ENCODE measurements at regions of chr20 and their contacts with region 1.

Region 1: DNA sequence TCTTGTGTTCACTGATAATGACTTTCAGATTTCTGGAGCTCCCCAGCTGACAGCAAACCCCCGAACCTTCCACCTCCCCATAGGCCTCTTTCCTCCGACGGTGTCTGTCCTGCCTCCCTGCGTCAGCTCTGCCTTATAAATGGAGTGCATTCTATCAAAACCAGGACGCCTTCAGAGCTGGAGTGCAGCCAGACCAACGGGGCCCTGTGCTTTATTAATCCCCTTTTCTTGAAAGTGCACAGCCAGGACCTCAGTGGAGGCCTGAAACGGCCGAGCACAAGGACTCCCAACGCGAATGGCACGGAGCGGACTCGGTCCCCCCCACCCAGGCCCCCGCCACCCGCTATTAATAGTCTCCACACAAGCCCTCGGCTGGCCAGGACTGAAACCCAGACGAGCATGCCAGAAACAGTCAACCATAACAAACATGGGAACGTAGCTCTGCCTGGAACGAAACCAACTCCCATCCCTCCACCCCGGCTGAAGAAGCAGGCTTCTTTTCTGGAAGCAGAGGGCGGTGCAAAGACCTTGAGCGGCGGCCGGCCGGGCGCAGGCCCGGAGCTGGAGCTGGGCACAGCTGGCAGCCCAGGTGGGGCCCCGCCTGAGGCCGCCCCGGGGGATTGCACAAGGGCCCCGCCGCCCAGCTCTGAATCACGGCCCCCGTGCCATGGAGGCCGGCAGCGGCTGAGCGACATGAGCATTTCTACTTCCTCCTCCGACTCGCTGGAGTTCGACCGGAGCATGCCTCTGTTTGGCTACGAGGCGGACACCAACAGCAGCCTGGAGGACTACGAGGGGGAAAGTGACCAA is 42.3 kb upstream of the NAA20 start:
- DNase-seq: peak; percentile 90 to 92 (median 91)
- ATAC-seq: peak; percentile 70 to 91 (median 82)
- H3K4me3 ChIP-seq: peak overlapping the region; percentile 42 to 79 (median 64)
- H3K27ac ChIP-seq: peak overlapping the region; percentile 90 to 96 (median 94)
- H3K4me1 ChIP-seq: peaks cover 12 to 100% (median 65%) of the 10 kb centered on the region in 12 donors
- H3K27me3 ChIP-seq: no peaks in the 10 kb centered on the region
- CTCF ChIP-seq: peak in 2 of 12 donors; percentile 9
- POLR2A ChIP-seq: peak in 1 of 2 donors; percentile 51

Region 2: GRCh38 chr20:19757487-19758132 is 217.2 kb before region 1 on chr20:
- intact Hi-C with region 1: loop called in 1 of 10 experiments (anchors 5 kb)
- DNase-seq: peak; percentile 92 to 96 (median 94)
- ATAC-seq: peak; percentile 86 to 93 (median 90)
- H3K4me3 ChIP-seq: peak overlapping the region; percentile 52 to 94 (median 78)
- H3K27ac ChIP-seq: peak overlapping the region; percentile 91 to 100 (median 98)
- H3K4me1 ChIP-seq: peaks cover 6 to 50% (median 38%) of the 10 kb centered on the region in 12 donors
- H3K27me3 ChIP-seq: no peaks in the 10 kb centered on the region
- CTCF ChIP-seq: no peak
- POLR2A ChIP-seq: no peak

Region 3: DNA sequence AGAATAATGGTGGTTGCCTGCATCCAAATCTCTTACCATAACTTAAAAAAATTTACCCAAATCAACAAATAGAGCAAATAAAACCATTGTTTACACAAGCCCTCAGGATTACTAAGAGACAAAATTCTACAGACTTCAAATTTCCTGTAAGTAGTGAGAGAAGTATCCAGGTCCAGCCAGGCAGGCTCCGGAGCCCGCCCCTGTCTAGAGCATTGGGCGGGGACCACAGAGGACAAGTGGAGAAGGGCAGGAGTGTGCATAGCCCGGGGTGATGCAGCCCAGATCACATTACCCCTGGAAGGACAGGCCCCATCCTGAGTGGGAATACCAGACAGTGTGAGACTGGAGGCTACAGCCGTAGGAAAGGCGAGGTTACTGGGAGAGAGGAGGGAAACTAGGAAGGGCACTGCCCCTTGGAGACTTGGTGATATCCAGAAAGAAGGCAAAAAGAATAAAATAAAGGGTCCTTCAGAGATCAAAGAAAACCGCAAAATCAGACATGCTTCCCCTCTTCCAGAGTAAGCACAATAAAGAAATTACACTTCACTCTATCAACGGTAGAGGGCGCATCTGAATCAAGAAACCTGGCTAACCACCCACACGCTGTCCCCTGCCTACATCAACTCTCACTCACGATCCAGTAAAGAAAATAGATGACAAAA is 190.2 kb before region 1 on chr20:
- intact Hi-C with region 1: loop called in 3 of 10 experiments (anchors 1 to 5 kb)
- DNase-seq: peak in 4 of 5 donors; percentile 64 to 78 (median 73)
- ATAC-seq: peak; percentile 67 to 79 (median 72)
- H3K4me3 ChIP-seq: peak overlapping the region in 2 of 12 donors; percentile 5 to 6
- H3K27ac ChIP-seq: peak overlapping the region; percentile 69 to 91 (median 84)
- H3K4me1 ChIP-seq: peaks cover 12 to 68% (median 46%) of the 10 kb centered on the region in 12 donors
- H3K27me3 ChIP-seq: no peaks in the 10 kb centered on the region
- CTCF ChIP-seq: peak; percentile 65 to 87 (median 81)
- POLR2A ChIP-seq: no peak

Region 4: GRCh38 chr20:19889011-19889953 is 85.5 kb before region 1 on chr20:
- intact Hi-C with region 1: loop called in 2 of 10 experiments (anchors 2 to 5 kb)
- DNase-seq: peak; percentile 71 to 83 (median 76)
- ATAC-seq: peak; percentile 65 to 85 (median 74)
- H3K4me3 ChIP-seq: peak overlapping the region; percentile 3 to 61 (median 52)
- H3K27ac ChIP-seq: peak overlapping the region; percentile 71 to 97 (median 89)
- H3K4me1 ChIP-seq: peaks cover 10 to 86% (median 65%) of the 10 kb centered on the region in 12 donors
- H3K27me3 ChIP-seq: no peaks in the 10 kb centered on the region
- CTCF ChIP-seq: no peak
- POLR2A ChIP-seq: no peak

Region 5: DNA sequence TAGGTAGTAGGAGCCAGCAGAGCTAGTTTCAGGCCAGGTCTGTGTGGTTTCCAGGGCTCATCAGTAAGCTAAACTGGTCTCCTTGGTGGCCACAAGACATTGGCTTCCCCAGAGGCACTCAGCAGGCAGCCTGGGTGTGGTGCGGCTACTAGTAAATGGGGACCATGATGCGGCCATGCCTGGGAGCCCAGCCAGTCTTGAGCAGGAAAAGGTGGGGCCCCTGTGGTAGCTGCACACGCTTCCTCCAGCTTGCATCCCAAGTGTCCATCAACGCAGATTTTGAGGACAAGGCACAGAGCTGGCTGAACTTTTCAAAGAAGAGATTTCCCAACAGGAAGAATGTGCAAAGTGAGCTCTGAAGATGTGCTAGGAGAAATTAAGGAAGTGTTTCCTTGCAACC is 65.1 kb before region 1 on chr20:
- intact Hi-C with region 1: loop called in 1 of 10 experiments (anchors 5 kb)
- DNase-seq: peak; percentile 79 to 90 (median 86)
- ATAC-seq: peak; percentile 66 to 95 (median 88)
- H3K4me3 ChIP-seq: no peak overlapping the region
- H3K27ac ChIP-seq: peak overlapping the region; percentile 43 to 80 (median 62)
- H3K4me1 ChIP-seq: peaks cover 3 to 75% (median 53%) of the 10 kb centered on the region in 12 donors
- H3K27me3 ChIP-seq: no peaks in the 10 kb centered on the region
- CTCF ChIP-seq: no peak
- POLR2A ChIP-seq: no peak

Region 6: DNA sequence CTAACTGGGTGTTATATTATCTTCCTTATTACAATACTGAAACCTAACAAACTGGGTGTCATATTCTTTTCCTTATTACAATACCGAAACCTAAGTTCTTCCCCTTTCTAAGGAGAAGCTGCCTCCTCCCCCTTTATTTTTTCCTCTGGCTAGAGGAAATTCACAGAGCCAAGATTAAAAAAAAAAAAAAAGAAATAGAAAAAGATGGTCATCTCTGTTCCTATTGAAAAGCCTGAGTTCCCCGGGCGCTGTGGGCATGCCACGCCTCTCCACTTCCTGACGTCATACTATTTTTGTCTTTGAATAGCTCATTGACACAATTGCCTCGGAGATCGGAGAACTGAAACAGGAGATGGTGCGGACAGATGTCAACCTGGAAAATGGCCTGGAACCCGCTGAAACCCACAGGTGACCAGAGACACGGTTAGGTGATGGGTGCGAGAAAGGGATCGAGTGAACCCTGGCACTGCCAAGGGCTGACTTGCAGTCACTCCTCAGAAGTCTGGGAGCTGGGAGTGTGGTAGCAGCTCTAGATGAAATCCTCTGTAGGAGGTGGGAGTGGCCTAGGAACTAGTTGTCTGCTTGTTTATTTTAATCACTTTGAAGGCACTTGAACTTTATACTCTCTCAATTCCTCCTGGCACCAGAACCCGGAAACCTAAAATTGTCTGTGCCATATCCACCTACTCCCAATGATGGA is 39.9 kb before region 1 on chr20:
- intact Hi-C with region 1: loop called in 5 of 10 experiments (anchors 5 kb)
- DNase-seq: peak in 4 of 5 donors; percentile 69 to 82 (median 77)
- ATAC-seq: peak; percentile 55 to 79 (median 62)
- H3K4me3 ChIP-seq: peak overlapping the region in 9 of 12 donors; percentile 25 to 55 (median 40)
- H3K27ac ChIP-seq: peak overlapping the region; percentile 7 to 90 (median 78)
- H3K4me1 ChIP-seq: peaks cover 7 to 94% (median 66%) of the 10 kb centered on the region in 12 donors
- H3K27me3 ChIP-seq: no peaks in the 10 kb centered on the region
- CTCF ChIP-seq: no peak
- POLR2A ChIP-seq: peak in 1 of 2 donors; percentile 24

Region 7: GRCh38 chr20:19947611-19948264 is 27.1 kb before region 1 on chr20:
- intact Hi-C with region 1: loop called in 2 of 10 experiments (anchors 5 kb)
- DNase-seq: no peak
- ATAC-seq: peak in 1 of 4 donors; percentile 40
- H3K4me3 ChIP-seq: no peak overlapping the region
- H3K27ac ChIP-seq: peak overlapping the region in 1 of 12 donors; percentile 9
- H3K4me1 ChIP-seq: peaks cover 11 to 68% (median 42%) of the 10 kb centered on the region in 12 donors
- H3K27me3 ChIP-seq: no peaks in the 10 kb centered on the region
- CTCF ChIP-seq: no peak
- POLR2A ChIP-seq: no peak

Region 8: DNA sequence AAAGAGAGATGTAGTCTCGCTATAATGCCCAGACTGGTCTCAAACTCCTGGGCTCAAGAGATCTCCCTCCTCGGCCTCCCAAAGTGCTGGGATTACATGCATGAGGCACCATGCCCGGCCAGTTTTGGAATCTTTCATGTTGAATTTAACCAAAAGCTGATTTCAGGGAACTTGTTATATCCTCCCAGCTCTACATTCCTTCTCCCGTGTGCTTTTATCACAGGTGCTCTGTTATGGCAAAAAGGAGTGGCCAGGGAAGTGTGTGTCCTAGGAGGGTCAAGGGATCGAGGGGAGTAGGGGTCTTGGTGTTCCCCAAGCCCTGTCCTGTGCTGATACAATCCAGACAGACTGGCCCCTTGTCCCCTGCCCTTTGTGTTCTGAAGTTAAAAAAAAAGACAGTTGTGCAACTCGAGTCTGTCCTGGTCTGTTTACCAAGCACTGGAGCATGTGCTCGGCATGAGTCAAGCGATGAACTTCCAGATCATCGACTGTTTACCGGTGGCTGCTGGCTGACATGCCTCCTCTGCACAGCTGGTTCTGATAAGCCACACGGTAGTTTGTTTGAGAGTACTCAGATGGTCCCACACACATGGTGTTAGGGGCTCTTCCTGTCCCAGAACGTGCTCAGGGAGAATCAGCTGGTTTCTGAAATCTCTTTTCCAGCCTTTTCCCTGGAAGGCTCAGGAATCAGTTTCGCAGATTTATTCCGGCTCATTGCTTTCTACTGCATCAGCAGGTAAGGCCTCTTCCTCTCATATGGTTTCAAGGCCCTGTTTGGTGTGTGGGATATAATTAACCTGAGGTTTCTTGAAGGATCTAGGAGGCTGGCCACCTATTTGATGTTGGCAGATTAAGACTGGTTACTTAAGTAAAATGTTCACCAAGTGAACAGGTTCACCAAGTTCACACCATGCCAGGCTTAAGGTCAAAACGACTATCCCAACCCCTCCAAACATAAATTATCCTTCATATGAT is 10.3 kb before region 1 on chr20:
- intact Hi-C with region 1: no loop called
- DNase-seq: peak in 3 of 5 donors; percentile 57 to 70 (median 68)
- ATAC-seq: peak; percentile 39 to 87 (median 77)
- H3K4me3 ChIP-seq: no peak overlapping the region
- H3K27ac ChIP-seq: peak overlapping the region in 10 of 12 donors; percentile 2 to 64 (median 41)
- H3K4me1 ChIP-seq: peaks cover 0 to 38% (median 13%) of the 10 kb centered on the region in 12 donors
- H3K27me3 ChIP-seq: no peaks in the 10 kb centered on the region
- CTCF ChIP-seq: no peak
- POLR2A ChIP-seq: no peak

Measured in heart left ventricle (tissue), 16 donors.